ENCODE measurements at regions of chr20 and their contacts with region 1.

Region 1: GRCh38 chr20:23995905-23996666 is 7.5 kb upstream of the GGTLC1 start:
- DNase-seq: peak; percentile 24
- H3K4me3 ChIP-seq: no peak overlapping the region
- H3K27ac ChIP-seq: no peak overlapping the region
- H3K4me1 ChIP-seq: no peaks in the 10 kb centered on the region
- H3K27me3 ChIP-seq: peaks cover 2 to 6% of the 10 kb centered on the region in 2 experiments
- CTCF ChIP-seq: peak; percentile 55 to 59
- POLR2A ChIP-seq: no peak

Region 2: GRCh38 chr20:23889775-23890211 is 106.3 kb before region 1 on chr20:
- CTCF ChIA-PET with region 1: no interaction called
- POLR2A ChIA-PET with region 1: no interaction called
- dilution Hi-C with region 1: no loop called
- intact Hi-C with region 1: loop called (anchors 10 kb)
- DNase-seq: peak; percentile 42
- H3K4me3 ChIP-seq: no peak overlapping the region
- H3K27ac ChIP-seq: no peak overlapping the region
- H3K4me1 ChIP-seq: no peaks in the 10 kb centered on the region
- H3K27me3 ChIP-seq: no peaks in the 10 kb centered on the region
- CTCF ChIP-seq: peak; percentile 63 to 73
- POLR2A ChIP-seq: no peak

Region 3: GRCh38 chr20:23937303-23938117 is 58.6 kb before region 1 on chr20:
- CTCF ChIA-PET with region 1: no interaction called
- POLR2A ChIA-PET with region 1: no interaction called
- dilution Hi-C with region 1: no loop called
- intact Hi-C with region 1: loop called (anchors 1 kb)
- DNase-seq: peak; percentile 60
- H3K4me3 ChIP-seq: no peak overlapping the region
- H3K27ac ChIP-seq: no peak overlapping the region
- H3K4me1 ChIP-seq: no peaks in the 10 kb centered on the region
- H3K27me3 ChIP-seq: no peaks in the 10 kb centered on the region
- CTCF ChIP-seq: peak; percentile 54 to 73
- POLR2A ChIP-seq: no peak

Measured in endothelial cell of umbilical vein (primary cell).